GM10248 (cell line): ENCODE measurements at regions of chr7 and their contacts with region 1.

Region 1: GRCh38 chr7:31134246-31135188 is 82.4 kb downstream of the ADCYAP1R1 start:
- DNase-seq: peak; percentile 75
- CTCF ChIP-seq: peak; percentile 71

Region 2: GRCh38 chr7:31122649-31123058 is 11.9 kb before region 1 on chr7:
- CTCF ChIA-PET with region 1: interaction called, 119 read pairs
- POLR2A ChIA-PET with region 1: no interaction called
- DNase-seq: peak; percentile 54
- CTCF ChIP-seq: peak; percentile 78

Region 3: DNA sequence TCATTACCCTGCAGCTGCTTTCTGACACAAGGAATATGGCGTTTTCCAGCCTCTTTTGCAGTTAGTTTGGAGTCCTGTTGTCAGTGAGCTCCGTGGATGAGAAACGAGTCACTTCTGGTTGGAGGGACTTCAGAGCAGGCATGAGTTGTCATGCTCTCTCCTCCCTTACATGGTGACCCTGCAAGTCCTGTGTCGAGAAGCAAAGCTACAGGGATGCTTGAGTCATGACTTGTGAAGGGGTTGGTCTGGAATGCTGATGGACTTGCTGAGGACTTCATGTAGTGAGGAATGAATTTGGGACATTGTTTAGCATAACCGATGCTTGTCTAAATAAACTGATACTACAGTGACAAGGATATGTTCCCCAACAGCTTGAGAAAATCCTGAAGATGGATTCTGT is 26.4 kb after region 1 on chr7:
- CTCF ChIA-PET with region 1: interaction called, 11 read pairs
- POLR2A ChIA-PET with region 1: no interaction called
- DNase-seq: no peak
- CTCF ChIP-seq: no peak

Region 4: DNA sequence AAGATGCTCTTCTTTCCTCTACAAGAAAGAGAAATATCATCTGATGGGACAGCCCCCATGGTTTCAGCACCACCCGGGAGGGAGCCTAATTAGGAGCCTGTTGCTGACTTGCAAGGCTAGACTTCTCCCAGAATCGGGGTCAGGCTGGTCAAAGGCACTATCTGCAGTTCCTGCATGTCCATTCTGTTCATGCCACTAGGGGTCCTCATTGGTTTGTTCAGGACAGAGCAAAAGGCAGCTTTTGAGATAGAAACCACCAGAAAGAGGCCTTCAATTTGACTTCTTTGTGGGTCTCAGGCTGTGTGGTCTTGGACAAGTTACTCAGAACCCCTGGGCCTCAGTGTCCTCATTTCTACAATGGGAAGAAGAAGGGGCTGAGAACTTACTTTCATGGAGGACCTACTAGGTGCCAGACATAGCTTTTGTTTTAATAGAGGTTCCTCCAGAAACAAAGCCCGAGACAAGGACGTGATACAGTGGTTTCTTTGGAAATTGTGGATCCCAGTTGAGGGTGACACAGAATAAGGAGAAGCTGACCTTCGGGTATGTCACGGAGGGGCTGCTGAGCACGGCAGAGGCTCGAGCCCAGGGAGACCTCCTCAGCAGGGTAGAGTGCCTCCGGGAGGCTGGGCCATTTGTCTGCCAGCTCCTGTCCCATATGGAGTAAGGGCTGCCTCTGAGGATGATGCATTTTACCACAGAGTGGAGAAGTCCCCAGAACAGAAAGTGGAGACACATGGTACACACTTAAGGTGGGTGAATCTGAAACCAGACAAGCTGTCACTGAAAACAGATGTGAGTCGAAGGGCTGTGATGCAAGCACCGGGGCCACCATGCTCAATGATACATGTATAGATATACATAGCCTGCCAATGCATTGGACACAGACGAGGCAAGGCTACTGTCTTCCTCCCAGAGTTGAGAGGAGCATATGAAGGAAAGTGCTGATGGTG is 239.1 kb after region 1 on chr7:
- CTCF ChIA-PET with region 1: no interaction called
- POLR2A ChIA-PET with region 1: no interaction called
- DNase-seq: peak; percentile 68
- CTCF ChIP-seq: peak; percentile 62

Region 5: GRCh38 chr7:31633894-31634494 is 499.5 kb after region 1 on chr7:
- CTCF ChIA-PET with region 1: interaction called, 23 read pairs
- POLR2A ChIA-PET with region 1: no interaction called
- DNase-seq: peak; percentile 22
- CTCF ChIP-seq: peak; percentile 43

Region 6: GRCh38 chr7:32347244-32347828 is 1212.8 kb after region 1 on chr7:
- CTCF ChIA-PET with region 1: interaction called, 10 read pairs
- POLR2A ChIA-PET with region 1: no interaction called
- DNase-seq: peak; percentile 25
- CTCF ChIP-seq: peak; percentile 49